Posterior vena cava (tissue), 2 donors: ENCODE measurements at regions of chr3 and their contacts with region 1.

Region 1: DNA sequence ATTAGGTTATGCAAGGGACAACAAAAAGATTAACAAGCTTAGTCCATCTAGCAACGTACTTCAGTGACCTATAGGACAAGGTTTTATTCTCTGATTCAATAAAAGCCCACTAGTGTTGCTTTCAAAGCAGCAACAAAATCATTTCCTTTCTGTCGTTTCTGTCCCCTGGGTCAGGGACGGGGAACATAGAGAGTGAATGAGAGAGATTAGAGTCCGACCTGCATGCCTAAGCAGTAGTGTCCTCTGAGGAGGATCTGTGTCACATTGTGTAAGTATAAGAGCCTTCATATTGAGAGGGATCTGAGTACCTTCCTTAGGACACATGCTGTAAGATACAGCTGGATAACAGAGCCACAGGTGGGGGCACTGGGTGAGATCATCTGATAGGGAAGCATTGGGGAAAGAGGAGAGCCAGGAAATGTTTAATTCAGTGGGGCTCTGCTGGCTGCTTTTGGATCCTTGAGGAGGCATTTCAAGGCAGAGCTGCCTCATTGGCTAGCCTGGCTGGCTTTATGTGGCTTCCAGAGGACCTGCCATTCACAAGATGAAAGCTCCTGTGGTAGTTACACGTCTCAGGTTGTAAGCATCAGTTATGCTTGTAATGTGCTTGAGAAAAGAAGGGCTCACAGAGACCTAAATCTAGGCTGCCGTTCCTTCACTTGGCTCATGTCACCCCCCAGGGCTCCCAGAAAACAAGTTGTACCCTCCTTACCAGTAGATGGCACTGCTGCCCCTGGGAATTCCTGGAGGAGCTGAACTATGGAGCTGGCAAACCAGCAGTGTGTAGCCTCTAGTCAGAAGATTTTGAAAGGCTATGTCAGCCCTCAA is 2.7 kb downstream of the TMEM108 start:
- DNase-seq: peak; percentile 82

Region 2: DNA sequence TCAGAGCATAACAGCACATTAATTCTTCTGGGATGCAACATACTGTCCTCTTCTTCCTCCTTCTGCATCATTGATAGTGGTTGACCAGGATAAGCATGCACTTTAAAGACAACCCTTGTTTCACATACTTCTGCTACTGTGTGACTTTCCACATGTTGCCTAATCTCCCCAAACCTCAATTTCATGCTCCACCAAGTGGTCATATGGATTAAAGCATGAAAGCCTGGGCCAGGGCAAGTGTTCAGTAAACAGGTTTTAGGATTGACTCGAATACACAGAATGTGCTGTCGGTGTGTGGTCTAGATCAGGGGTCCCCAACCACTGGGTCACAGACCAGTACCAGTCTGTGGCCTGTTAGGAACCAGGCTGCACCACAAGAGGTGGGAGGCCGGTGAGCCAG is 336.5 kb after region 1 on chr3:
- intact Hi-C with region 1: loop called (anchors 5 kb)
- DNase-seq: no peak